ENCODE measurements at regions of chr1 and their contacts with region 1.

Region 1: DNA sequence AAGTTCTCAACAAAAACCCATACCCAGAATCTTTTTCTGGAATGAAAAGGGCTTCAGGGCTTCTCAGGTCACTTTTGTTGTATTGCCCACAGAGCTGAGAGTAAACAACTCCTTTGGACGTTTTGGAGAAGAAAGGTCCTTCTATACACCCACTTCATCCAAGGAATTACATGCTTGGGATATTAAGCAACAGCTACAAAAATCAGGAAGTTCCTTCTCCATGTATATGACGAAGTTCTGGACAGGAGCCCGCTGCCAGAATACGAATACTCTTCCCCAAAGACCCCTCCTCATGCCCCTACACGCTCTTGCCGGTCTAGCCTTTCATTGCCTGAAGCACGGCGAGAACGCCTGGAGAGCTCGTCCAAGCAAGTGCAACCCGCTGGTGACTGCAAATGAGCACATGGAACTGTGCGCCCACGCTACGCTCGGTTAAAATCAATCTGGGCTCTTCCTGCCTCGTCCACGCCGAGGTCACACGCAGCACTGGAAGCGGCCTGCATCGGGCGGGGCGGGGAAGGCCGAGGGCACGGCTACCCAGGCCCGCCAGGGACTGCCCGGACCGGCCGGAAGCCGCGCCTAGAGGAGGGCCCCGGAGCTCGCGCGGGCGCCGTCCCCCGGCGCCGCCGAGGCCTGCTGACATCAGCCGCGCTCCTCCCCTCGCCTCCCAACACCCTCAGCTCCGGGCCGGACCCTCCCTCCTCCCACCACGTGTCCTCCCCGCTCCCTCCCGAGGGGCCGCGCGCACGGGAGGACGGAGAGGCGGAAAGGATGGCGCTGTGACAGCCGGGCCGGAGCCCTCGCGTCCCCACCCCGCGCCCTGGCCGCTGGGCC is at the start of gene POGK:
- DNase-seq: peak; percentile 88
- H3K4me3 ChIP-seq: peak within 1 kb of the TSS; percentile 59 to 73 (median 61)
- H3K27ac ChIP-seq: peak within 1 kb of the TSS; percentile 62
- H3K4me1 ChIP-seq: peaks cover 30% of the 10 kb centered on the region
- H3K27me3 ChIP-seq: no peaks in the 10 kb centered on the region
- CTCF ChIP-seq: peak in 1 of 2 donors; percentile 4
- total RNA-seq, gene POGK: 28.7 to 36.2 TPM

Region 2: GRCh38 chr1:166785987-166786386 is 53.0 kb before region 1 on chr1:
- CTCF ChIA-PET with region 1: no interaction called
- dilution Hi-C with region 1: no loop called
- in situ Hi-C with region 1: no loop called
- intact Hi-C with region 1: loop called (anchors 10 kb)
- DNase-seq: no peak
- H3K4me3 ChIP-seq: no peak overlapping the region
- H3K27ac ChIP-seq: no peak overlapping the region
- H3K4me1 ChIP-seq: no peaks in the 10 kb centered on the region
- H3K27me3 ChIP-seq: no peaks in the 10 kb centered on the region
- CTCF ChIP-seq: peak in 1 of 2 donors; percentile 22

Region 3: GRCh38 chr1:166875734-166876539 is 37.0 kb after region 1 on chr1 and contains the start of gene TADA1:
- CTCF ChIA-PET with region 1: no interaction called
- dilution Hi-C with region 1: no loop called
- in situ Hi-C with region 1: no loop called
- intact Hi-C with region 1: loop called (anchors 2 kb)
- DNase-seq: peak; percentile 98
- H3K4me3 ChIP-seq: peak within 1 kb of the TSS; percentile 76 to 87 (median 83)
- H3K27ac ChIP-seq: peak within 1 kb of the TSS; percentile 67
- H3K4me1 ChIP-seq: peaks cover 8% of the 10 kb centered on the region
- H3K27me3 ChIP-seq: no peaks in the 10 kb centered on the region
- CTCF ChIP-seq: no peak
- total RNA-seq, gene TADA1: 8.6 to 13.5 TPM

Measured in mammary epithelial cell (primary cell).